ENCODE measurements at regions of chr12 and their contacts with region 1.

Region 1: DNA sequence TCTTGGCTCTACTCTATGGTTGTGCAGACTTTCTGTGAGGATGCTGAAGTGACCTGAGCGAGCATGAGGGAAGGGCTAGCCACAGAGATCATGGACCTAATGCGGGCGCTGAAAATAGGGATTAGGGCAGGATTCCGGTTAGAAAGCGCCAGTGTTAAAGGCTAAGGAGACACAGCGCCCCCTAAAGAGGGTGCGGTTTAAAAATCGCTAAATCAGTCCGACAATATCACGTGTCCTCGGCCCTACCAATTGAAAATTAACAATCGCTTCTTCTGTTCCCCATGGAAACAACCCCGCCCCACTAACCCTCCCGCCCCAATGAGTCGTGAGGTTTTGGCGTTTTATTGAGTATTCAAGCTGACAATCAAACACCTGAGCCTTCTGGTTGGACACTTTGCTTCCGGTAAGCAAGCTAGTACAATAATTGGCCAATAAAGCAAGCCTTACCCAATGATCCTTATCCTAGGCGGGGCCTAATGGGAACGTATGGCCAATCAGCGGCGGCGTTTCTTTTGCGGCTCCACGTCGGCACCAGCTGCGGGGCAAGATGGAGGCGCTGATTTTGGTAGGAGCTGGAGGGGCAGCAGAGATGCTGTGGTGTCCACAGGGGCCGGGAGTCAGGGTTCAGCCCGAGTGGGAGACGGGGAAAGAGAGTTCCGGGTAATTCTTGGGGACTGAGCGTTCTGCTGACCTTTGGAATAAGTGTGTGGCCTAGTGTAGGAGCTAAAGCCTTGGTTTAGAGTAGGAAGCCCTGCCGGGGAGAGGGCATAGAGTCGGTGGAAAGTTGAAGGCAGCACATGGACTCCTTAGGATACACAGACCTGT is at the start of gene COPZ1:
- DNase-seq: peak; percentile 96
- H3K4me3 Mint-ChIP-seq: peak within 1 kb of the TSS; percentile 92
- H3K27ac Mint-ChIP-seq: peak within 1 kb of the TSS; percentile 91
- H3K4me1 Mint-ChIP-seq: peaks cover 45% of the 10 kb centered on the region
- H3K27me3 Mint-ChIP-seq: no peaks in the 10 kb centered on the region
- total RNA-seq, gene COPZ1: 126 to 130 TPM

Region 2: GRCh38 chr12:54273981-54274380 is 50.8 kb before region 1 on chr12:
- CTCF ChIA-PET with region 1: interaction called, 10 read pairs
- POLR2A ChIA-PET with region 1: no interaction called
- DNase-seq: no peak
- H3K4me3 Mint-ChIP-seq: no peak overlapping the region
- H3K27ac Mint-ChIP-seq: no peak overlapping the region
- H3K4me1 Mint-ChIP-seq: peaks cover 72% of the 10 kb centered on the region
- H3K27me3 Mint-ChIP-seq: no peaks in the 10 kb centered on the region

Region 3: DNA sequence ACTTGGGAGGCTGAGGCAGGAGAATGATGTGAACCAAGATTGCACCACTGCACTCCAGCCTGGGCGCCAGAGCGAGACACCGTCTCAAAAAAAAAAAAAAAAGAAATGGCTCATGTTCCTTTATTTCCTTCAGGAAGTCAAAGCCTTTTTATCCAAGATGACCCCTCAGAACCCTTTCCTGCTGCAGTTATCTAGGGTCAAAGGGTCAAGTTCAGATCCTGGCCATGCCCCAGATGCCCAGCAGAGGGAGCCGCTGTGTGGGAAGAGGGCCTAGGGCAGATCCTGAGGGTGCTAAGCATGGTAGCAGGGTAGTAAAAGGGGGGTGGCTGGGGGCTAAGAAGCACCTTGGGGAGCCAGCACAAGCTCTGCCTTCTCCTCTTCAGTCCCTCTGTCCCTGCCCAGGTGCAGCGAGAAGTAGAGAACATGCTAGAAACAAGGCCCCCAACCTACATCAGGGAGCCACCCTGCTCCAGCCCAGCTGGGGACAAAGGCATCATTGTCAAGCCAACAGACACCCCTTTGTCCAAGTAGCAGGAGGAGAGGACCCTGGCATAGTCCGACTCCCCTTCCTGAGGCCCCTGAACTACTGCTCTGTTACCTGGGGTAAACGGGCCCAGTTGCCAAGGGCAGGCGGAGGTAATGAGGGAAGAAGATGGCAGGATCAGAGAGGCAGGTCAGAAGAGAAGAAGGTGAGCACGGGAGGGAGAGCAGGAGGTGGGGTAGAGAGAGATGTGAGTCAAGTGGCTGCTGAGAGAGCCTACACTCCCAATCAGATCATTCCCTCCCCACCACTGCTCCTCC is 30.5 kb before region 1 on chr12:
- CTCF ChIA-PET with region 1: interaction called, 72 read pairs
- POLR2A ChIA-PET with region 1: interaction called, 8 read pairs
- DNase-seq: peak; percentile 75
- H3K4me3 Mint-ChIP-seq: no peak overlapping the region
- H3K27ac Mint-ChIP-seq: no peak overlapping the region
- H3K4me1 Mint-ChIP-seq: peaks cover 12% of the 10 kb centered on the region
- H3K27me3 Mint-ChIP-seq: peaks cover 18% of the 10 kb centered on the region

Region 4: GRCh38 chr12:54337280-54337842 is 12.5 kb after region 1 on chr12:
- CTCF ChIA-PET with region 1: interaction called, 105 read pairs
- POLR2A ChIA-PET with region 1: interaction called, 8 read pairs
- DNase-seq: no peak
- H3K4me3 Mint-ChIP-seq: no peak overlapping the region
- H3K27ac Mint-ChIP-seq: no peak overlapping the region
- H3K4me1 Mint-ChIP-seq: peaks cover 10% of the 10 kb centered on the region
- H3K27me3 Mint-ChIP-seq: no peaks in the 10 kb centered on the region

Region 5: DNA sequence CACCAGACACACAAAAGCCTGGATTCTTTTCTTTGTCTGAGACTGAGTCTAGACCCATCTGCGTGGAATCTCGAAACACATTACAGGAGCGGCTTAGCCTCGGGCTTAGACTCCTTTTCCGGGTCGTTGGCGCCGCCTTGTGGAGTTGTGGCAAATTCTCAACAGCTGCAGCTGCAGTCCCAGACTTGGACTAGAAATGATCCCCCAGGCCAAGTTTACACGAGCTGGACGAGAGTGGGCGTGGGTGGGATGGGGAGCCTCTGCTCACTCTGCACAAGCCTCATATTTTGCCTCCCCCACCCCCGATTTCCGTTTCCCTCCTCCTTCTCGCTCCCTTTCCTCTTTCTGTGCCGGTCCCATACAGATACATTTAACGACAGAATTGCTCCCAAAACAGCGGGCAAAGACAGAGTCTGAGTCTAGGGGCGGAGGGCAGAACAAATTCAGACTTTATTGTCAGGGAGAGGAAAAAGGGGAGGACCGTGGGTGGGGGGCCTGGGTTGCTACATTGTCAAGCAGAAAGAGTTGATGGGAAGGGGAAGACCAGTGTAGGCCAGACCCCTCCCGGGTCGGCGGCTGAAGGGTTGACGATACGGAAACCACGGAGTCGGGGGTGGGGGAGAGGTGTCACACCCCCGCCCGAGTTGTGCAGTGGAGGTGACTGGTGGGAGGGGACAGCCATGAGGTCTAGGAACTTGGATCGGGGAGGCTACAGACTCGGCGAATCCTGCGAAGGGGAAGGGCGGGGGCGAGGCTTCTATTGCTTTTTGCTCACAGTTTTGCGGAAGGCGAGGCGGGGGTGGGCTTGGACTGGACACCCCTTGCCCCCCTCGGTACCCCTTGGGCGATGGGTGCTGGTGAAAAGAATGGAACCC is 44.1 kb after region 1 on chr12:
- CTCF ChIA-PET with region 1: interaction called, 12 read pairs
- POLR2A ChIA-PET with region 1: interaction called, 3 read pairs
- DNase-seq: peak; percentile 90
- H3K4me3 Mint-ChIP-seq: no peak overlapping the region
- H3K27ac Mint-ChIP-seq: no peak overlapping the region
- H3K4me1 Mint-ChIP-seq: peaks cover 54% of the 10 kb centered on the region
- H3K27me3 Mint-ChIP-seq: peaks cover 16% of the 10 kb centered on the region